ENCODE measurements at regions of chr7 and their contacts with region 1.

Region 1: DNA sequence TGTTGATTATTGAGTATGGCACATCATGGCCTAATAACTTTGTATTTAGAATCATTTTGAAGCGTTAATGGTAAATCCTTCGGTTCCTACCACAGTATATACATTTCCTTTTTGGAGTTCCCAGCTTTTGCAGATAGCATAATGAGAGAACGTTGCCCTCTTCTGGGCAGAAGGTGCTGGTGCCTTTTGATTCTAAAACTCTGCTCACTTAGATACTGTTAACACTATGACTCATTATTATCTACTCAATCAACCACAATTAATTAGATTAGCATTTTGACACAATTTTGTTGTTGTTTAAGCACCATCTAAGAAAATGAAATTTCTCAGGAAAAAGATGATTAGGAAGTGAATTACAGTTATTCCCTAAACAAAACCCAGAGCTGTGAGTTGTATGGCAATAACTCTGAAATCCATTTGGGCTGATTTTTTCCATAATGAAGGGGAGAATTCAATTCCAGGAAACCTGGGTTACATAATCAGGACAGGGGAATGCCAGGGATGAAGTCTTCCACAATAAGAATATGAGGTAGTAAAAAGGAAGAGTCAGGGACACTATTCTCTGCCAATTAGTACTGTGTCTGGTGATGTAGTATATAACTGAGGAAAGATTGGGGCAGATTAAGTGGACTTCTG is 11.5 kb upstream of the DLD start:
- DNase-seq: peak; percentile 39 to 79
- H3K4me3 ChIP-seq: no peak overlapping the region
- H3K27ac ChIP-seq: no peak overlapping the region
- H3K4me1 ChIP-seq: peaks cover 13% of the 10 kb centered on the region; the same call in 1 of the 2 replicates
- H3K27me3 ChIP-seq: no peaks in the 10 kb centered on the region
- CTCF ChIP-seq: peak; percentile 82

Region 2: GRCh38 chr7:106793015-106793975 is 1086.2 kb before region 1 on chr7:
- CTCF ChIA-PET with region 1: interaction called, 9 read pairs
- POLR2A ChIA-PET with region 1: no interaction called
- intact Hi-C with region 1: loop called (anchors 5 kb)
- DNase-seq: no peak
- H3K4me3 ChIP-seq: no peak overlapping the region
- H3K27ac ChIP-seq: no peak overlapping the region
- H3K4me1 ChIP-seq: no peaks in the 10 kb centered on the region
- H3K27me3 ChIP-seq: no peaks in the 10 kb centered on the region
- CTCF ChIP-seq: peak; percentile 87

Region 3: GRCh38 chr7:107150375-107151073 is 729.0 kb before region 1 on chr7:
- CTCF ChIA-PET with region 1: no interaction called
- POLR2A ChIA-PET with region 1: no interaction called
- intact Hi-C with region 1: loop called (anchors 1 kb)
- DNase-seq: peak; percentile 45 to 70
- H3K4me3 ChIP-seq: no peak overlapping the region
- H3K27ac ChIP-seq: no peak overlapping the region
- H3K4me1 ChIP-seq: peaks cover 12% of the 10 kb centered on the region; the same call in 1 of the 2 replicates
- H3K27me3 ChIP-seq: no peaks in the 10 kb centered on the region
- CTCF ChIP-seq: peak; percentile 87

Region 4: GRCh38 chr7:107462740-107463444 is 416.6 kb before region 1 on chr7:
- CTCF ChIA-PET with region 1: interaction called, 27 read pairs
- POLR2A ChIA-PET with region 1: no interaction called
- intact Hi-C with region 1: loop called (anchors 1 kb)
- DNase-seq: peak; percentile 60 to 65
- H3K4me3 ChIP-seq: no peak overlapping the region
- H3K27ac ChIP-seq: no peak overlapping the region
- H3K4me1 ChIP-seq: peaks cover 8% of the 10 kb centered on the region
- H3K27me3 ChIP-seq: no peaks in the 10 kb centered on the region
- CTCF ChIP-seq: peak; percentile 90

Region 5: GRCh38 chr7:107690611-107691010 is 188.9 kb before region 1 on chr7:
- CTCF ChIA-PET with region 1: no interaction called
- POLR2A ChIA-PET with region 1: no interaction called
- intact Hi-C with region 1: no loop called
- DNase-seq: no peak
- H3K4me3 ChIP-seq: no peak overlapping the region
- H3K27ac ChIP-seq: no peak overlapping the region
- H3K4me1 ChIP-seq: no peaks in the 10 kb centered on the region
- H3K27me3 ChIP-seq: no peaks in the 10 kb centered on the region
- CTCF ChIP-seq: no peak

Region 6: DNA sequence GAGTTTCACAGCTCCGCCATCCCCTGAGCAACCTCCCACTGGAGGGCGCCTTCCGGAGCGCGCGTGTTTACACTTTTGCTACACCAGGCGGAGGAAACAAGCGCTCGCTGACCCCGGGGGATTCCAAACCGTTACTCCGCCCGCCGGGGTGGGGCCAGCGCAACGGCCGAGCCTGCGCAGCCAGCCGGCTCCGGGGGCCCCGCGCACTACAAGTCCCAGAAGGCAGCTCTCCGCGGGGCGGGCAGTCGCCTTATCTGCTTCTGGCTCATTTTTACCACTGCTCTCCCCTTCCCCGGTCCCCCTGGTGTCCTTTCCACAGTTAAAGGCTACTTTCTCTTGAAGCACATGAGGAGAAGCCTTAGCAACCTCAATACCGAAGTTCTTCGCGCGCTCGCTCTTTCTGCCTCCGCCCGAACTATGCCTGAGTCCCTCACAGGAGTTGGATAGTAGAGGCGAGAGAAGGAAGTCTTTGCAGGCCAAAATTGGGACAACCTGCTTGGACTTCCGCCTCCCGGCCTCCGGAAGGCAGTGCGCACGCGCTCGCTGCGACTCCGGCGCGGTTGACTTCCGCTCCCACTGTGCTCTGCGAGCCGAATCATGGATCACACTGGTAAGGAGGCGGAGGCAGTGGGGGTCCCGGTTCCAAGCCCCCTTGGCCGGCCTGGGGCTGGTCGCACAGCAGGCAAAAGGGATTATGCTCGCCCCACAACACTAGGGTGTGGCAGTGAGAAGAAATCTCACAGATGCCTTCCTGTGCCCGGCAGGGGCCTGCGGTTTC is 135.8 kb before region 1 on chr7 and contains the start of gene CBLL1:
- CTCF ChIA-PET with region 1: interaction called, 16 read pairs
- POLR2A ChIA-PET with region 1: interaction called, 3 read pairs
- intact Hi-C with region 1: loop called (anchors 2 kb)
- DNase-seq: peak; percentile 84 to 98
- H3K4me3 ChIP-seq: peak within 1 kb of the TSS; percentile 72
- H3K27ac ChIP-seq: peak within 1 kb of the TSS; percentile 88
- H3K4me1 ChIP-seq: peaks cover 24% of the 10 kb centered on the region
- H3K27me3 ChIP-seq: no peaks in the 10 kb centered on the region
- CTCF ChIP-seq: no peak; the same call in none of the 2 replicates
- total RNA-seq, gene CBLL1: 24.5 and 31.3 TPM in 2 replicates

Region 7: DNA sequence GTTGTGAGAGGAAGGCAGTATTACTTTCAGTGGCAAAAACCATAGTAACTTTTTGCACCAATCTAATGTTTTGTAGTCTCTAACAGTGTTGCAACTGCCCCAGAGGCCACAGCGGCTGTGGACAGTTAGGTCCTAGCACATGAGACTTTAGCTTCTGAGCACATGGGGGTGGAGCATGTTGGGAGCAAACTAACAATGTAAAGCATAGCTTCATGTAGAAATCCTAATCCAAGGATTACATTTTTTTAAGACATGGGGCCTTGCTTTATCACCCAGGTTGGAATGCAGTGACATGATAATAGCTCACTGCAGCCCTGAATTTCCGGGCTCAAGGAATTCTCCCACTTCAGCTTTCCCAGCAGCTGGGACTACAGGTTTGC is 74.4 kb after region 1 on chr7:
- CTCF ChIA-PET with region 1: interaction called, 5 read pairs
- POLR2A ChIA-PET with region 1: no interaction called
- intact Hi-C with region 1: loop called (anchors 2 kb)
- DNase-seq: no peak
- H3K4me3 ChIP-seq: no peak overlapping the region
- H3K27ac ChIP-seq: peak overlapping the region; percentile 86
- H3K4me1 ChIP-seq: peaks cover 69% of the 10 kb centered on the region
- H3K27me3 ChIP-seq: no peaks in the 10 kb centered on the region
- CTCF ChIP-seq: no peak

Region 8: GRCh38 chr7:108246227-108246837 is 366.8 kb after region 1 on chr7:
- CTCF ChIA-PET with region 1: no interaction called
- POLR2A ChIA-PET with region 1: no interaction called
- intact Hi-C with region 1: no loop called
- DNase-seq: peak; percentile 87 to 94
- H3K4me3 ChIP-seq: peak overlapping the region; percentile 15
- H3K27ac ChIP-seq: peak overlapping the region; percentile 92
- H3K4me1 ChIP-seq: peaks cover 46% of the 10 kb centered on the region
- H3K27me3 ChIP-seq: no peaks in the 10 kb centered on the region
- CTCF ChIP-seq: no peak

Measured in PC-9 (cell line).